Prostate gland (tissue), 2 donors: ENCODE measurements at regions of chr12 and their contacts with region 1.

Region 1: GRCh38 chr12:39319187-39319586 is 123.7 kb downstream of the KIF21A start:
- DNase-seq: no peak
- H3K4me3 ChIP-seq: no peak overlapping the region
- H3K27ac ChIP-seq: no peak overlapping the region
- H3K4me1 ChIP-seq: no peaks in the 10 kb centered on the region
- H3K27me3 ChIP-seq: no peaks in the 10 kb centered on the region
- CTCF ChIP-seq: no peak
- POLR2A ChIP-seq: no peak

Region 2: DNA sequence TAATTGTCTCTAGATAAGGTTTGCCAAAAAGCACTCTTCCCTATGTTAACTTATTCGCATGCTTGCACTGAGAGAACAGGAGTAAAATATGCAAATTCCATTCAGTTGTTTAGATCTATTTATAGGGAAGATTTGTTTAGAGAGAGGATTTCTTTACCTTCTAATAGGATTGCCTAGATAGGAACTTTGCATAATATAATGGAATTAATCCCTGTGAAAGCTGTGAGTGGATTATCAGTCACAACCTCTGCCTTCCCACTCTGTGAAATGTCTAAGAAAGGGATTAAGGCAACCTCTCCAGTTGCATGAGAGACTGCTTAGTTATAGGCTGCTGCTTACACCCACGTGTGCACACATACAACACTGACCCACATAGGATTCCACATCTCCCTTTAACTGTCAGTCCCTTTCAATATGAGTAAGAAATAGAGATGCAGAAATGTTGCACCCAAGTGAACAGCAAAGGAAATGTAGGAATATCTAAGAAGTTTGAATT is 919.4 kb before region 1 on chr12:
- intact Hi-C with region 1: no loop called
- DNase-seq: no peak
- H3K4me3 ChIP-seq: no peak overlapping the region
- H3K27ac ChIP-seq: no peak overlapping the region
- H3K4me1 ChIP-seq: no peaks in the 10 kb centered on the region
- H3K27me3 ChIP-seq: no peaks in the 10 kb centered on the region
- CTCF ChIP-seq: no peak
- POLR2A ChIP-seq: no peak

Region 3: DNA sequence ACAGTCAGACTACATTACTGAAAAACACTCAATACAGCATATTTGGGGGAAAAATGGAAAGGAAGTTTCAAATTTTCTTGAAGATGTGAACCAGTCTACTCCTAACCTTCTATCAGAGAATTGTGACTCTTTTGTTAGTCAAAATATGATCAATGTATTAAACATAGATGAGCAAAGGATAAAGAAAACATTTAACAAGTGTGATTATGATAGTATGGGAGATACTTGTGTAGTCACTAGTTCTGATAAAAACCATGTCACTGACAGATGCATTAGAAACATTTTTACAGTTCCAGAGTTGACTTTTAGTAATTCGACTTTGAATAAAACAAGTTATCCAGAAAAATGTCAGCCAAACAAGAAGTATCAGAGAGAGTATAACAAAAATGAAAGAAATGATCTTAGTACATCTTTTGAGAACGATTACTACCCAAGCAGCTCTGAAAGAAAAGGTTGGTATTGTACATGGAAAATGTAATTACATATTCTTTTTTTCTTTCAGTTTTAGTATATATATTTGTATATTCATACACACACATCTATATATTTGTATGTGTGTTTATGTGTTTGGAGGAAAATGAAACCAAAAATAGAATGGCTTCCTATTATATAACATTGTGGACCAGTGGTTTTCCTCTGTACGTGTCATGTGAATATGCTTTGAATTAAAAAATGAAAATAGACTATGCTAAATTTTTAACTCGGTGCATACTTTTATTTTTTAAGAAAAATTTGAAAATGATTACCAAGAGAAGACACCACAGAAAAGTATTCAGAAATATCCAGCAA is 363.7 kb after region 1 on chr12:
- intact Hi-C with region 1: loop called (anchors 10 kb)
- DNase-seq: no peak
- H3K4me3 ChIP-seq: no peak overlapping the region
- H3K27ac ChIP-seq: no peak overlapping the region
- H3K4me1 ChIP-seq: no peaks in the 10 kb centered on the region
- H3K27me3 ChIP-seq: no peaks in the 10 kb centered on the region
- CTCF ChIP-seq: no peak
- POLR2A ChIP-seq: no peak